ENCODE measurements at regions of chr18 and their contacts with region 1.

Region 1: GRCh38 chr18:57241869-57242268 is 95.0 kb downstream of the BOD1L2 start:
- DNase-seq: no peak
- ATAC-seq: no peak
- H3K4me3 ChIP-seq: no peak overlapping the region
- H3K4me3 Mint-ChIP-seq: no peak overlapping the region
- H3K27ac ChIP-seq: no peak overlapping the region
- H3K27ac Mint-ChIP-seq: no peak overlapping the region
- H3K4me1 ChIP-seq: no peaks in the 10 kb centered on the region
- H3K4me1 Mint-ChIP-seq: no peaks in the 10 kb centered on the region
- H3K27me3 ChIP-seq: no peaks in the 10 kb centered on the region
- H3K27me3 Mint-ChIP-seq: peaks cover 0 to 15% (median 0%) of the 10 kb centered on the region in 5 donors

Region 2: GRCh38 chr18:57214976-57215375 is 26.9 kb before region 1 on chr18:
- CTCF ChIA-PET with region 1: no interaction called
- POLR2A ChIA-PET with region 1: no interaction called
- intact Hi-C with region 1: loop called in 1 of 2 experiments (anchors 1 kb)
- DNase-seq: no peak
- ATAC-seq: no peak
- H3K4me3 ChIP-seq: no peak overlapping the region
- H3K4me3 Mint-ChIP-seq: no peak overlapping the region
- H3K27ac ChIP-seq: no peak overlapping the region
- H3K27ac Mint-ChIP-seq: no peak overlapping the region
- H3K4me1 ChIP-seq: no peaks in the 10 kb centered on the region
- H3K4me1 Mint-ChIP-seq: peaks cover 1 to 4% (median 2%) of the 10 kb centered on the region in 7 donors
- H3K27me3 ChIP-seq: no peaks in the 10 kb centered on the region
- H3K27me3 Mint-ChIP-seq: peaks cover 8 to 33% (median 14%) of the 10 kb centered on the region in 5 donors

Region 3: DNA sequence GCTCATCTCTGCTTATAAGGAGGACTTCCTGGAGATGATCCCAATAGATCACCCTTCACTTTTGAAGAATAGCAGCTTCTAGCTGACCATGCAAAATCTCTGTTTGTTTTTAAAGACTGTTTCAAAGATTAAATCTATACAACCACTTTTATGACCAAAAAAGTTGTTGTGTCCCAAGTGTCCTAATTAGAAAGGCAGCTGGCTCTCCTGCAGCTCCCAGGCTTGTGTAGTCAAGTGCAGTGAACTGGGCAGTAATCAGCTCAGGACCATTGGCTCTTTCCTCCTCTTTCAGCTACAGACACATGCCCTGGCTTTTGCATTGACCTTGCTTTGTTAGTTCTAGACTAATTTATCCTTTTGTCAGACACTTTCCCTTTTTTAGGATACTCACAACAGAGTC is 120.8 kb after region 1 on chr18:
- CTCF ChIA-PET with region 1: no interaction called
- POLR2A ChIA-PET with region 1: no interaction called
- intact Hi-C with region 1: no loop called
- DNase-seq: no peak
- ATAC-seq: no peak
- H3K4me3 ChIP-seq: no peak overlapping the region
- H3K4me3 Mint-ChIP-seq: no peak overlapping the region
- H3K27ac ChIP-seq: no peak overlapping the region
- H3K27ac Mint-ChIP-seq: no peak overlapping the region
- H3K4me1 ChIP-seq: no peaks in the 10 kb centered on the region
- H3K4me1 Mint-ChIP-seq: no peaks in the 10 kb centered on the region
- H3K27me3 ChIP-seq: no peaks in the 10 kb centered on the region
- H3K27me3 Mint-ChIP-seq: peaks cover 2 to 46% (median 12%) of the 10 kb centered on the region in 5 donors